Cardiac septum (tissue), 1 donor: ENCODE measurements at regions of chr9 and their contacts with region 1.

Region 1: GRCh38 chr9:4077499-4078102 is 222.3 kb downstream of the GLIS3 start:
- DNase-seq: peak; percentile 80

Region 2: DNA sequence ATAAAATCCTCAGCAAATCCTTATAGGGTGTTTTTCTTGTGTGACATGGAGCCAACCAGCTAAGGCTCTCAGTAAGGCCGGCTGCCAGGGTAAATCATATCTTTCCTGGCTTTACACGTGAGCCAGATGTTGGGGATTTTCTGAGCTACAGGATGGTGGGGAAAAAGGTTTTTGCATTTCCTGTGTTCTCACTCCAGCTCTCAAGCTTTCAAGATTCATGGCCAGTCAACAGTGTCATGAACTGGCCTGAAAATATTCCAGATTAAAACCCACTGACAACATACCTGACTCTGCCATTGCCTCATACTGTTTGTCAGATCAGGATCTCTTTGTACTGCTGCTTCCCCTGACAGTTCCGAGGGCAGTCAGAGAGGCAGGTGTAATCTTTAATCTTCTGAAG is 84.7 kb before region 1 on chr9:
- intact Hi-C with region 1: no loop called
- DNase-seq: no peak

Region 3: DNA sequence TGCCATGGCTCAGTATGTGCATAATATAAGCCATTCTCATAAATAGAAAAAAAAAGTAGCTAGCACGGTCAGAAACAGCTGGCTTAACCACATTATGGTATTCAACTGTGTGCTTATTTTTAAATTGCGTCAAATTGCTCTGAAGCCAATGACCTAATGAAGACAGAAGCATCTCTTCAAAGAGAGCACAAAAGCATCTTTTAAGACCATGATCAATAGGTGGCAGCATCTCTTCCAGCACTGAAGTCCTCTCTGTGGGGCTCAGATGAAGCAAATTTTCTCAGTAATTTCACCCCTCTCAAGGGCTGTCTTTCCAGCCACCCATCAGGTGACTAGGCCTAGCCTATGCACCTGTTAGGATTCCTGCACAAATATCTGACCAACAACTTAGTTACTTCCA is 29.2 kb before region 1 on chr9:
- intact Hi-C with region 1: no loop called
- DNase-seq: no peak

Region 4: GRCh38 chr9:4207881-4208615 is 130.4 kb after region 1 on chr9:
- intact Hi-C with region 1: loop called (anchors 10 kb)
- DNase-seq: no peak